ENCODE measurements at regions of chr20 and their contacts with region 1.

Region 1: DNA sequence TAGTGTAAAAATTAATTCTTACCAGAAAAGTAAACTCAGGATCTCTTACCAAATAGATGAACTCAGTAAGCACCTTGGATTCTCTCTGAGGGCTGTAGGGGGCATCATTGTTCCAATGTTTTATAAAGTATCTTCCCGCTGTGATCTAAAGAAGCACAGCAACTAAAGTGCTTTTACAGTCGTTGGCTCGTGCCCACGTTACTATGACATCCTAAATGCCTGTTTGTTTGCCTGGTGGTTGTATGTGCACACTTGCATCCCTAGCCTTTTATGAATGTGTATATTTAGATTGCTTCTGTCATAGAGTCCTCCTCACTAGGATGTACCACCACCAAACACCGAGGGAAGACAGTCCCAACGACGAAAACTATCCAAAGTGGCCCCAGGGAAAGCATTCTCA is 34.5 kb downstream of the SLX4IP start:
- DNase-seq: peak in 1 of 2 donors; percentile 69
- ATAC-seq: peak; percentile 84
- H3K4me3 ChIP-seq: no peak overlapping the region
- H3K27ac ChIP-seq: peak overlapping the region in 1 of 2 donors; percentile 13
- H3K4me1 ChIP-seq: peaks cover 5 to 8% of the 10 kb centered on the region in 2 donors
- H3K27me3 ChIP-seq: no peaks in the 10 kb centered on the region

Region 2: DNA sequence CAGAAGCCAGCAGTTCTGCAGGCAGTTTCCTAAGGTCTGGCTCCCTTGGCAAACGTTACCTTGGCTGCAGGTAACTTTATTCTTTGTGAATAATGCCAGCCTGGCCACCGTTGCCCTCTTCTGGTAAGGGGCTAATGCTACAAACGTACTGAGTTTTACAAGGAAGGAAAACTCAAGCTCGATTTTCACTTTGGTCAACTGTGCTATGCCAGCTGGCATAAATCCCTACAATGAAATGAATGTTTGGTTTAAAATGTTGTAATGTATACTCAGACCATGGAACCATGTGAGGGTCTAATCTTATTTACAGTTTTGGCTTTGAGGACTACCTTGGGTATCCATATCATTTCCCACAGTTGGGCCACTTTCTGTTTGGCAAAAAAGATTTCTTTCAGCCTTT is 66.9 kb after region 1 on chr20:
- intact Hi-C with region 1: no loop called
- DNase-seq: no peak
- ATAC-seq: no peak
- H3K4me3 ChIP-seq: no peak overlapping the region
- H3K27ac ChIP-seq: no peak overlapping the region
- H3K4me1 ChIP-seq: no peaks in the 10 kb centered on the region
- H3K27me3 ChIP-seq: no peaks in the 10 kb centered on the region

Region 3: DNA sequence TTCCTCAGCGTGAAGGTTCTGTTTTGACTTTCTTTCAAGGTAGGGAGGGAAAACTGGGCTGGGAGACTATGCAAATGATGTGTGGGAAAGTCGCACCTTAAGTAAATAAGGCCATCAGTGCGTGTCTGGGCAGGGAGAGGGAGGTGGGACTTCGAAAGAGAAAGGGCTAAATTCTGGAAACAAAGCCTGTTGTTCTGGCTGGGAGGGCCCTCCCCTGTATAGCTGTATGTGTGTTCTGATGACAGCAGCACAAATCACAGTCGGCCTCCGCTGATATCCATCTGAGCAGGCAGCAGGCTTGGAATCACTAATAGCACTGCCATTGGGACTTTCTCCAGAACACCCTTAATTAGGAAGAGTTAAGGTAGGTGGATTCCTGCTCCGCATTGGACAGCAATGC is 185.0 kb after region 1 on chr20:
- intact Hi-C with region 1: loop called in 1 of 2 experiments (anchors 5 kb)
- DNase-seq: peak in 1 of 2 donors; percentile 52
- ATAC-seq: no peak
- H3K4me3 ChIP-seq: no peak overlapping the region
- H3K27ac ChIP-seq: peak overlapping the region; percentile 89 to 95
- H3K4me1 ChIP-seq: peaks cover 2 to 4% of the 10 kb centered on the region in 2 donors
- H3K27me3 ChIP-seq: no peaks in the 10 kb centered on the region

Region 4: GRCh38 chr20:10667077-10667401 is 197.4 kb after region 1 on chr20:
- intact Hi-C with region 1: loop called (anchors 5 kb)
- DNase-seq: peak; percentile 88 to 94
- ATAC-seq: peak; percentile 58
- H3K4me3 ChIP-seq: peak overlapping the region in 1 of 2 donors; percentile 7
- H3K27ac ChIP-seq: peak overlapping the region; percentile 62 to 97
- H3K4me1 ChIP-seq: peaks cover 2 to 11% of the 10 kb centered on the region in 2 donors
- H3K27me3 ChIP-seq: no peaks in the 10 kb centered on the region

Region 5: GRCh38 chr20:11274141-11274594 is 804.6 kb after region 1 on chr20:
- intact Hi-C with region 1: loop called (anchors 2 to 5 kb)
- DNase-seq: peak in 1 of 2 donors; percentile 48
- ATAC-seq: peak; percentile 86
- H3K4me3 ChIP-seq: no peak overlapping the region
- H3K27ac ChIP-seq: no peak overlapping the region
- H3K4me1 ChIP-seq: peaks cover 0 to 2% of the 10 kb centered on the region in 2 donors
- H3K27me3 ChIP-seq: no peaks in the 10 kb centered on the region

Region 6: GRCh38 chr20:11544029-11544678 is 1074.6 kb after region 1 on chr20:
- intact Hi-C with region 1: loop called (anchors 5 to 10 kb)
- DNase-seq: no peak
- ATAC-seq: peak; percentile 78
- H3K4me3 ChIP-seq: no peak overlapping the region
- H3K27ac ChIP-seq: no peak overlapping the region
- H3K4me1 ChIP-seq: no peaks in the 10 kb centered on the region
- H3K27me3 ChIP-seq: no peaks in the 10 kb centered on the region